ENCODE measurements at regions of chr2 and their contacts with region 1.

Region 1: GRCh38 chr2:28594289-28595108 is 98.6 kb downstream of the PLB1 start:
- DNase-seq: peak; percentile 85
- CTCF ChIP-seq: peak; percentile 86

Region 2: GRCh38 chr2:28423856-28424605 is 170.5 kb before region 1 on chr2:
- CTCF ChIA-PET with region 1: no interaction called
- POLR2A ChIA-PET with region 1: no interaction called
- DNase-seq: no peak
- CTCF ChIP-seq: no peak

Region 3: GRCh38 chr2:28566521-28567041 is 27.9 kb before region 1 on chr2:
- CTCF ChIA-PET with region 1: interaction called, 39 read pairs
- POLR2A ChIA-PET with region 1: no interaction called
- DNase-seq: peak; percentile 96
- CTCF ChIP-seq: peak; percentile 100

Region 4: GRCh38 chr2:28583899-28584553 is 10.5 kb before region 1 on chr2:
- CTCF ChIA-PET with region 1: interaction called, 37 read pairs
- POLR2A ChIA-PET with region 1: no interaction called
- DNase-seq: no peak
- CTCF ChIP-seq: no peak

Region 5: DNA sequence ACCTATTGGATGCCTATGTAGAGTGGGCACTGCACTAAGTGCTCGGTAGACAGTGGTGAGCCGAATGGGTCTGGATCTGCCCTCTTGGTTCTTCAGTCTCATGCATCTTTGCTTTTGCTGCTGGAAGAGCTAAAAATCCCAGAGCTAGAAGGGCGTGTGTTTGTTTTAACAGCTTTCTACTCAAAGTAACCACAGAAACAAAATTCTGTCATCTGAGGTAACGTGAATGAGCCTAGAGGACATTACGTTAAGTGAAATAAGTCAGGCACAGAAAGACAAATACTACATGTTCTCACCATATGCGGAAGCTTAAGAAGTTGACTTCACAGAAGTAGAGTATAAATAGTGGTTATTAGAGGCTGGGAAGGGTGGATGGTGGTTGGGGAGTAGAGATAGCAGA is 21.2 kb after region 1 on chr2:
- CTCF ChIA-PET with region 1: interaction called, 126 read pairs
- POLR2A ChIA-PET with region 1: no interaction called
- DNase-seq: no peak
- CTCF ChIP-seq: no peak

Region 6: DNA sequence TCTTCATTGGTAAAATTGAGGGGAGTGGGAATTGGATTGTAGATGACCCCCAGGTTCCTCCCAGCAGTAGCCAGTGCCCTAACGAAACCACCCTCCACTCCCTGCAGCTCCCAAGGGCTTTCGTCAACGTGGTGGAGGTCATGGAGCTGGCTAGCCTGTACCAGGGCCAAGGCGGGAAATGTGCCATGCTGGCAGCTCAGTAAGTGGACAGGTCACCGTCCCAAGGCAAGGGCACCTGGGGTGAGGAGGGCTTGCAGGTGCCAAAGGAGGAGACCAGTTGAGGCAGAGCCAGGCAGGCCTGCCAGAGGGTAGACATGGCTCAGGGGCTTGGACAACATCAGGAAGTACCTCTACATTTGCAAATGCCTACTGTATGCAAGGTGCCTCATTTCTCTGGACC is 34.5 kb after region 1 on chr2:
- CTCF ChIA-PET with region 1: interaction called, 18 read pairs
- POLR2A ChIA-PET with region 1: no interaction called
- DNase-seq: no peak
- CTCF ChIP-seq: no peak